MCF 10A (cell line): ENCODE measurements at regions of chr17 and their contacts with region 1.

Region 1: GRCh38 chr17:11212792-11213191 is 28.2 kb upstream of the SHISA6 start:
- DNase-seq: no peak
- H3K4me3 Mint-ChIP-seq: no peak overlapping the region
- H3K27ac Mint-ChIP-seq: no peak overlapping the region
- H3K4me1 Mint-ChIP-seq: no peaks in the 10 kb centered on the region
- H3K27me3 Mint-ChIP-seq: no peaks in the 10 kb centered on the region
- CTCF ChIP-seq: no peak

Region 2: GRCh38 chr17:11195801-11196200 is 17.0 kb before region 1 on chr17:
- CTCF ChIA-PET with region 1: interaction called, 5 read pairs
- POLR2A ChIA-PET with region 1: no interaction called
- intact Hi-C with region 1: loop called (anchors 1 kb)
- DNase-seq: no peak
- H3K4me3 Mint-ChIP-seq: no peak overlapping the region
- H3K27ac Mint-ChIP-seq: no peak overlapping the region
- H3K4me1 Mint-ChIP-seq: peaks cover 5% of the 10 kb centered on the region
- H3K27me3 Mint-ChIP-seq: no peaks in the 10 kb centered on the region
- CTCF ChIP-seq: no peak

Region 3: DNA sequence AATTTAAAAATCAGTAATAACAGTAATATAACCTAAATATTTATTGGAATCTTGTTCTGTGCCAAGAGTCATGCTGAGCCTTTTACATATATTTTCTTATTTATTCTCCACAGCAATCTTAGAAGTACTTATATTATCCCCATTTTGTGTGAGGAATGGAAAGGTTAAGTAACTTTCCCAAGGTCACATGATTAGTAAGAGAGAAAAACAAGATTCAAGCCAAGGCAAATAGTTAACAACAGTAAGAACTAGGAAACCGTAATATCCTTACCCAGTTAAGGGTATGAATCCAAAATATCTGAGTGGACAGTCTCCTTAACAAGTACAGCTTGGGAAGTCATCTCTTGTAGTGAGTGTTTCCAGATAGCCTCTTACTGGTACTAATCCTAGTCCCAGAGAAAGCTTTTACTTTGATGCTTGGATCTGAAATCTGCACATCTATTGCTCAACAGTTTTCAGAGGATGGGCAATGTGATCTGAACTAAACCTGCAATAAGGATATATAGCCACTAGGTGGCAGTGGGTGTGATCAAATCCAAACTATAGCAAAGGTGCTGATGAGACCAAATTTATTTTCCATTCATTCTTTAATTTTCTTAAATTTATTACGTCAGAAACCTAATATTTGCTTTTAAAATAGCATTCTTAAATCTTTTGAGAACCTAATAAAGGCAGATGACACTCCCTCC is 51.5 kb after region 1 on chr17:
- CTCF ChIA-PET with region 1: no interaction called
- POLR2A ChIA-PET with region 1: no interaction called
- intact Hi-C with region 1: no loop called
- DNase-seq: peak; percentile 0
- H3K4me3 Mint-ChIP-seq: no peak overlapping the region
- H3K27ac Mint-ChIP-seq: no peak overlapping the region
- H3K4me1 Mint-ChIP-seq: no peaks in the 10 kb centered on the region
- H3K27me3 Mint-ChIP-seq: peaks cover under 1% of the 10 kb centered on the region
- CTCF ChIP-seq: peak; percentile 36